Activated CD8-positive, alpha-beta T cell treated with anti-CD3 and anti-CD28 coated beads for 36 hours (primary cell): ENCODE measurements at regions of chr18 and their contacts with region 1.

Region 1: GRCh38 chr18:8003878-8004675 is 437.0 kb downstream of the PTPRM start:
- DNase-seq: no peak
- ATAC-seq: no peak
- H3K4me3 Mint-ChIP-seq: no peak overlapping the region
- H3K27ac Mint-ChIP-seq: no peak overlapping the region
- H3K4me1 Mint-ChIP-seq: no peaks in the 10 kb centered on the region
- H3K27me3 Mint-ChIP-seq: no peaks in the 10 kb centered on the region
- CTCF ChIP-seq: no peak

Region 2: GRCh38 chr18:7980136-7980535 is 23.9 kb before region 1 on chr18:
- CTCF ChIA-PET with region 1: no interaction called
- POLR2A ChIA-PET with region 1: no interaction called
- intact Hi-C with region 1: no loop called
- DNase-seq: peak; percentile 2
- ATAC-seq: no peak
- H3K4me3 Mint-ChIP-seq: no peak overlapping the region
- H3K27ac Mint-ChIP-seq: no peak overlapping the region
- H3K4me1 Mint-ChIP-seq: no peaks in the 10 kb centered on the region
- H3K27me3 Mint-ChIP-seq: no peaks in the 10 kb centered on the region
- CTCF ChIP-seq: no peak

Region 3: DNA sequence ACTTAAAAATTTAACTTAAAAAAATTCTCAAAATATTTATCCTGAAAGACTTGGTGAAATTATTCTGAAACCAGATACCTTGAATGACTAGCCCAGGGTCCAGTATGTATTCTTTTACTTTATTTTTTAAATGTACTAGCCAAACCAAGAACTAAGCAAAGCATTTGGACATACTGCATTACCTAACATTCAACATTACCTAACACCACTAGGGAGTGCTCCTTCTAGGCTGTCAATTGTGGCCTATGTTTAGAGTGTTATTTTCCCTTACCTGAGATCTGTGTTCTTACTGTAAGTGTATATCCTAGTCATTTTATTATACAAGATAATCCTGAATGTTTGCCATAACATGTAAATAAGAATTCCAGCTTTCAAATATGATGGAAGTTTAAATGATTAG is 59.7 kb after region 1 on chr18:
- CTCF ChIA-PET with region 1: no interaction called
- POLR2A ChIA-PET with region 1: no interaction called
- intact Hi-C with region 1: loop called (anchors 10 kb)
- DNase-seq: no peak
- ATAC-seq: no peak
- H3K4me3 Mint-ChIP-seq: no peak overlapping the region
- H3K27ac Mint-ChIP-seq: no peak overlapping the region
- H3K4me1 Mint-ChIP-seq: no peaks in the 10 kb centered on the region
- H3K27me3 Mint-ChIP-seq: no peaks in the 10 kb centered on the region
- CTCF ChIP-seq: no peak